ENCODE measurements at regions of chr2 and their contacts with region 1.

Region 1: DNA sequence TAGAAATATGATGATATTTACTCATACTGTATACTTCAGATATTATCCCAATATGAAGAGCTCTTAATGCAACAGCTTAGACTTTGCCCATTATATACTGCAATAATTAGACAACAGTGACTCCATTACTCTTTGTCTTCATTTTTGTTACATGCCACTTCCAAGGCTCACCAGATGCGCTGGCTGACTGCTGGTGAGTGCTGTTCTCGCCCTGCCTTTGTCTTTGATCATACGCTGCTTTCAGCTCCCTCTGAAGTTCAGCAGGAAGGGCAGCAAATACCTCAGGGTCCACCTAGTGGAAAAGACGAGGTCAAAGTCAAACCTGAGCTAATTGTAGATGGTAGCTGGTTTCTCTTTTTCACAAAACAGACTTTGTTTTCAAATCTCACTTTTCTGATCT is 66.3 kb downstream of the EIF5B start:
- DNase-seq: peak in 1 of 2 experiments; percentile 15
- H3K4me3 ChIP-seq: no peak overlapping the region
- H3K27ac ChIP-seq: no peak overlapping the region
- H3K4me1 ChIP-seq: peaks cover 0 to 4% (median 2%) of the 10 kb centered on the region in 4 experiments; a peak in 4 of 7 replicates
- H3K27me3 ChIP-seq: no peaks in the 10 kb centered on the region
- CTCF ChIP-seq: peak; percentile 1 to 53 (median 34); a peak in 3 of 4 replicates
- EP300 ChIP-seq: no peak
- POLR2A ChIP-seq: no peak
- RAD21 ChIP-seq: peak; percentile 30 to 52; a peak in 3 of 4 replicates

Region 2: GRCh38 chr2:99354070-99354469 is 49.5 kb before region 1 on chr2:
- CTCF ChIA-PET with region 1: no interaction called
- POLR2A ChIA-PET with region 1: no interaction called
- DNase-seq: no peak
- H3K4me3 ChIP-seq: no peak overlapping the region
- H3K27ac ChIP-seq: no peak overlapping the region
- H3K4me1 ChIP-seq: no peaks in the 10 kb centered on the region; a peak in 1 of 7 replicates
- H3K27me3 ChIP-seq: no peaks in the 10 kb centered on the region
- CTCF ChIP-seq: no peak
- EP300 ChIP-seq: no peak
- POLR2A ChIP-seq: no peak
- RAD21 ChIP-seq: no peak

Region 3: GRCh38 chr2:99389371-99389770 is 14.2 kb before region 1 on chr2:
- CTCF ChIA-PET with region 1: interaction called, 11 read pairs
- POLR2A ChIA-PET with region 1: interaction called, 4 read pairs
- DNase-seq: no peak
- H3K4me3 ChIP-seq: no peak overlapping the region
- H3K27ac ChIP-seq: no peak overlapping the region
- H3K4me1 ChIP-seq: no peaks in the 10 kb centered on the region
- H3K27me3 ChIP-seq: no peaks in the 10 kb centered on the region
- CTCF ChIP-seq: no peak
- EP300 ChIP-seq: no peak
- POLR2A ChIP-seq: no peak
- RAD21 ChIP-seq: no peak